ENCODE measurements at regions of chr6 and their contacts with region 1.

Region 1: GRCh38 chr6:17945111-17945510 is 42.3 kb downstream of the KIF13A start:
- DNase-seq: no peak
- H3K4me3 ChIP-seq: no peak overlapping the region
- H3K27ac ChIP-seq: peak overlapping the region in 1 of 2 donors; percentile 12
- H3K4me1 ChIP-seq: peaks cover 0 to 28% of the 10 kb centered on the region in 2 donors
- H3K27me3 ChIP-seq: no peaks in the 10 kb centered on the region
- CTCF ChIP-seq: no peak

Region 2: DNA sequence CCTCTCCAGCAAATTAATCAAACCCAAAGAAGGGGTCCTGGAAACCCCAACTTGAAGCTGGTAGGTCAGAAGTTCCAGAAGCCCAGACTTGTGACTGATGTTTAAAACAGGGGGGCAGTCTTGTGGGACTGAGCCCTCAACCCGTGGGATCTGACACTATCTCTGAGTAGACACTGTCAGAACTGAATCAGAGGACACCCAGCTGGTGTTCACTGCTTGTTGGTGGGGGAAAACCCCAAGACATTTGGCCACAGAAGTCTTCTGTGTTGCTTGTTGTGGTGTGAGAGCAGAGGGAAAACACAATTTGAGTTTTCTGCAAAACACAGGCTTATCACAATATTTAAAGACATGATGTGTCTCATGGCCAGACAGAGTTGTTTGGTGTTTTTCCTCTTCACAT is 12.4 kb after region 1 on chr6:
- intact Hi-C with region 1: loop called (anchors 1 kb)
- DNase-seq: no peak
- H3K4me3 ChIP-seq: no peak overlapping the region
- H3K27ac ChIP-seq: peak overlapping the region; percentile 61 to 89
- H3K4me1 ChIP-seq: peaks cover 9 to 44% of the 10 kb centered on the region in 2 donors
- H3K27me3 ChIP-seq: no peaks in the 10 kb centered on the region
- CTCF ChIP-seq: no peak

Region 3: DNA sequence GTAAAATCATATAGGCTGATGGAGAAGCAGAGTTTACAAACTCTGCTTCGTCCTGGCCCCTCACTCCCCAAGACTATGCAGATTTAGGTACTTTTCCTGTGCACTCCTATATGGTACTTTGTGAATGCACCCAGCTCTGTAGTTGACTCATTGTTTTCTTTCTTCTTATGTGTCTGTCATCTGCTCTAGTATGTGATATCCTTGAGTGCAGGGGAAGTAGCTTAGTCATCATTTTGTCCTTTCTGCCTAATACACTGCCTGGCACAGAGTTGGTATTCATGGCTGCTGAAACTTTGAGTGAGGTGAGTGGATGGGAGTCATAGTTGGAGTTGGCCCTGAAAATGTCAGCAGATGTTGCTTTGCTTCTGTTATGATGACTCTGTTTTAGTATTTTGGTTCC is 664.6 kb after region 1 on chr6:
- intact Hi-C with region 1: no loop called
- DNase-seq: no peak
- H3K4me3 ChIP-seq: no peak overlapping the region
- H3K27ac ChIP-seq: no peak overlapping the region
- H3K4me1 ChIP-seq: no peaks in the 10 kb centered on the region
- H3K27me3 ChIP-seq: no peaks in the 10 kb centered on the region
- CTCF ChIP-seq: no peak

Measured in ascending aorta (tissue), 2 donors.